Sigmoid colon (tissue), 7 donors: ENCODE measurements at regions of chr11 and their contacts with region 1.

Region 1: GRCh38 chr11:19742588-19743292 is 30.1 kb downstream of the NAV2 start:
- DNase-seq: peak; percentile 92
- H3K4me3 ChIP-seq: no peak overlapping the region
- H3K27ac ChIP-seq: peak overlapping the region in 3 of 4 donors; percentile 52 to 97 (median 64)
- H3K4me1 ChIP-seq: peaks cover 0 to 61% (median 40%) of the 10 kb centered on the region in 4 donors
- H3K27me3 ChIP-seq: no peaks in the 10 kb centered on the region
- CTCF ChIP-seq: peak; percentile 82 to 94 (median 94)
- EP300 ChIP-seq: no peak
- POLR2A ChIP-seq: no peak

Region 2: DNA sequence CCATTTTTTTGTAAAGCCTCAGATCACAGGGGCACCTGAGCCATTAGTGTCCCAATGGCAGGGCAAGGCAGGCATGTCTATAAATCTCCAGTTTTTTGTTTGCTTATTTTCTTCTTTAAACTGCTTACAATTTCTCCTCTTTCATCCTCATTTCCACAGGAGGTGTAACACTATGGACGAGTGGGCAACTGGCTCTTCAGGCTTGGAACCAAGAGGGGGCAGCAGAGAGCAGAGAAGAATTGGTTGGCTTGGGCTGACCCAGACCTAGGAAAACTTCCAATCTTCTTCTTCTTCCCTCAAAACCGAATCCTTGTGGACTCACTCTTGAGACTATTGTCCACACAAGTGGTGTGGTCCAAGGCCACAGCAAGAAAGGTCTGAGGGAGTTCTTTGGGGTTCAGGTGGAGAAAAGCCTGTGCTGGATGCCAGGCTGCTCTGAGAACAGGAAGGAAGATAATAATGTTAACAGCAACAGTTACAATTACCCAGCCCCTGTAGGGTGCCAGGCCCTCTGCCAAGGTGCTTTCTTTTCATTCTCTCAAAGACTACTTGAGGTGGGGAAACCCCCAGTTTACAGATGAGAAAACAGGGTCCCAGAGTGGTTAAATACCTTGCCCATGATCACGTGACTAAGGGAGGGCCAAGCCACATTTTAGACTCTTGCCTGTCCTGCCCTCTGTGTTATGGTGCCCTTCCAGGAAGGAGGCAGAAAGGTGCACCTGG is 431.3 kb before region 1 on chr11:
- intact Hi-C with region 1: loop called (anchors 10 kb)
- DNase-seq: peak; percentile 75
- H3K4me3 ChIP-seq: no peak overlapping the region
- H3K27ac ChIP-seq: no peak overlapping the region
- H3K4me1 ChIP-seq: peaks cover 0 to 6% (median 4%) of the 10 kb centered on the region in 4 donors
- H3K27me3 ChIP-seq: no peaks in the 10 kb centered on the region
- CTCF ChIP-seq: peak; percentile 21 to 77 (median 70)
- EP300 ChIP-seq: no peak
- POLR2A ChIP-seq: no peak

Region 3: DNA sequence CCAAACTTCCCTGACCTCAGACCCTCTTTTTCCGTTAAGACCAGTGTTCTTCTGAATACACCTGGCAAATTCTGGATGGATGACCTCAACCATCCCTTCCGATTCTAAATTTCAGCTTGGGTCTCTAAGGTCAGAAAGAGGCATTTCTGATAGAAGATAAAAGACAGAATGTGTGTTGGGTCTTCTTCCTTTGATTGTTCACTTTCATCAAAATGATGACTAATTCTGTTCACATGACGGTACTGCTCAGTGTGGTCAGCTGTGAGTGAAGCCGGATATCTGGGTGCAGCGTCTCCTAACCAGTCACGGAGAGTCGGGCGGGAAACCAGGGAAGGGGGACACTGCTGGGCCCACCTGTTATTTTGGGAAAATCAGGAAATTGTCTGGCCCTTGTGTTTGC is 181.7 kb before region 1 on chr11:
- intact Hi-C with region 1: loop called (anchors 1 kb)
- DNase-seq: no peak
- H3K4me3 ChIP-seq: no peak overlapping the region
- H3K27ac ChIP-seq: no peak overlapping the region
- H3K4me1 ChIP-seq: peaks cover 0 to 33% (median 25%) of the 10 kb centered on the region in 4 donors
- H3K27me3 ChIP-seq: no peaks in the 10 kb centered on the region
- CTCF ChIP-seq: no peak
- EP300 ChIP-seq: no peak
- POLR2A ChIP-seq: no peak

Region 4: GRCh38 chr11:19712281-19713220 is 30.2 kb before region 1 on chr11 and contains the start of gene NAV2:
- intact Hi-C with region 1: no loop called
- DNase-seq: peak; percentile 97
- H3K4me3 ChIP-seq: peak within 1 kb of the TSS; percentile 62 to 85 (median 72)
- H3K27ac ChIP-seq: peak within 1 kb of the TSS; percentile 93 to 98 (median 96)
- H3K4me1 ChIP-seq: peaks cover 0 to 61% (median 54%) of the 10 kb centered on the region in 4 donors
- H3K27me3 ChIP-seq: no peaks in the 10 kb centered on the region
- CTCF ChIP-seq: no peak
- EP300 ChIP-seq: peak in 1 of 4 donors; percentile 42
- POLR2A ChIP-seq: peak; percentile 89 to 95
- total RNA-seq, gene NAV2: 22.1 to 62.6 (median 38.2) TPM

Region 5: DNA sequence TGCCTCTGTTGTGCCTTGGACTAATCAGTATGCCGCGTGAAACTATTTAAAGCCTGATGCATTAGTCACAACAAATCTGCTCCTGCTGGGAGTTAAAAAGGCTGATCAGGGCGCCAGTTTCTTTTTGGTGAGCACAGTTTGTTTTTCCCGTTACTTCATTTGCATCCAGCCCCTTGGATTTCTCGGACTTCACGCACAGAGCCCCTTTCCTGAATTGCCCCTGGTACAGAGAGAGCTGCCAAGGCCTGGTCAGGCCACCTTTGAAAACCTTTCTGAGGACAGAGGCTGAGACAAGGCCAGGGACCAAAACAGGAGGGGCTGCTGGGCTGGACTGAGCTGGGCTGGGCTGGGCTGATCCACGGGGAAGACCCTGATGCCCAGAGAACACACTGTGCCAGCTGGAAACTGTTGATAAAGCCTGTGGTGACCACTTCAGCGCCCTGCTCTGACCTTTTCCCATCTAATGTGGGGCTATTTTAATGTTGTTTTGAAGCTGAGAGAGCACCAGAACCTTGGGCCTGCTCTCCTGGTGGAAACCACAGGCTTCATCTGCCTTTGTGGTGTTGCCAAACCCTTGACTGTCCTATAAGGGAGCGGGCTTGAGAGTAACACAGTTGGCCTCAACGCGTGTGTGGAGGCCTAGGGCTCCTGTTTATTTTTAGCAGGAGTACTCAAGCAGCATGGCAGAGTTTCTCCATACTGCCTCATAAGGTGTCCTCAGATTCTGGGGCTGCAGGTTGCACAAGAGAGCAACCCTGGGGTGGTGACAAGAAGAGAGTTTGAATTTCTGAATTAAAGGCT is 14.1 kb after region 1 on chr11:
- intact Hi-C with region 1: no loop called
- DNase-seq: peak; percentile 77
- H3K4me3 ChIP-seq: no peak overlapping the region
- H3K27ac ChIP-seq: peak overlapping the region; percentile 60 to 82 (median 74)
- H3K4me1 ChIP-seq: peaks cover 0 to 38% (median 26%) of the 10 kb centered on the region in 4 donors
- H3K27me3 ChIP-seq: no peaks in the 10 kb centered on the region
- CTCF ChIP-seq: no peak
- EP300 ChIP-seq: no peak
- POLR2A ChIP-seq: no peak

Region 6: DNA sequence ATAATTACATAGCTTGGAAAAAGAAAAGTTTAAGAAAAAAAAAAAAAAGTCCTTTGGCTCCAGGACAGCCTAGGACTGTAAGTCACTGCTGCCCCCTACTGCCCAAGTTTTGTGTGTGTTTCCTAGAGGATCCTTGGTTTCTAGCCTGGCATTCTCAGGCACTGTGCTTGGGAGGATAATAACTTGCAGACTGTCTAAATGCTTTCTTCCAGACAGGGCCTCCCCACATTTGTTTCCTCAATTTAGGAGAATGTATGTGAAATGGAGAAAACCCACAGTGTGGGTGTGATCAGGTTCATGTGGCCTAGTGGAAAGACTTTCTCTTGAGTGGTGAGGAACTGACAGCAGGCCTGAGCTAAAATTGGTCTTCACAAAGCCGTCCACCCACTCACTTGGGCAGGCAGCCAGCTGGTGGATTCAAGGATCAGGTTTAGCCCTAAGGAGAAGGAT is 160.9 kb after region 1 on chr11:
- intact Hi-C with region 1: loop called (anchors 2 kb)
- DNase-seq: peak; percentile 87
- H3K4me3 ChIP-seq: no peak overlapping the region
- H3K27ac ChIP-seq: peak overlapping the region in 3 of 4 donors; percentile 56 to 60 (median 59)
- H3K4me1 ChIP-seq: peaks cover 0 to 58% (median 48%) of the 10 kb centered on the region in 4 donors
- H3K27me3 ChIP-seq: no peaks in the 10 kb centered on the region
- CTCF ChIP-seq: peak; percentile 54 to 79 (median 66)
- EP300 ChIP-seq: no peak
- POLR2A ChIP-seq: no peak

Region 7: GRCh38 chr11:20110908-20111669 is 368.3 kb after region 1 on chr11:
- intact Hi-C with region 1: loop called (anchors 5 kb)
- DNase-seq: no peak
- H3K4me3 ChIP-seq: no peak overlapping the region
- H3K27ac ChIP-seq: peak overlapping the region; percentile 79 to 93 (median 88)
- H3K4me1 ChIP-seq: peaks cover 0 to 81% (median 69%) of the 10 kb centered on the region in 4 donors
- H3K27me3 ChIP-seq: no peaks in the 10 kb centered on the region
- CTCF ChIP-seq: peak; percentile 23 to 74 (median 70)
- EP300 ChIP-seq: peak; percentile 44 to 93 (median 89)
- POLR2A ChIP-seq: no peak